ENCODE measurements at regions of chr2 and their contacts with region 1.

Region 1: DNA sequence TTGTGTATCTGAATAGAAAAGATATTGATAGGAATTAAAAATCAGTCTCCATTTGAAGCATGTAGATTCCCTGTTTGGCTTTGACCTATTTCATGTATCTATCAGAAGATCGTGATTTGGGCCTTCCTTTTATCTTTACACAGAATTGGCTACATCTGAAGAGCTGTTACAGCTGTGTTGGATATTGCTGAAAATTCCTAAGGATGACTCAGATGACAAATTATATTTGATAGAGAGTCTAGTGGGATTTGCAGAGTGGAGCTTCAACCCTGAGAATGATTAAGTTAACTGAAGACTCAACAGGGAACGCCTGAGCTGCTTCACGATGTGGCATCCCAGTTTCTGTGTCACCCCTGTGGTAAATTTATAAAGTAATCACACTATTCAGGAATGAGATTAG is 4.9 kb upstream of the COL3A1 start:
- DNase-seq: no peak
- ATAC-seq: no peak
- H3K4me3 ChIP-seq: no peak overlapping the region
- H3K27ac ChIP-seq: no peak overlapping the region
- H3K4me1 ChIP-seq: no peaks in the 10 kb centered on the region
- H3K27me3 ChIP-seq: no peaks in the 10 kb centered on the region

Region 2: DNA sequence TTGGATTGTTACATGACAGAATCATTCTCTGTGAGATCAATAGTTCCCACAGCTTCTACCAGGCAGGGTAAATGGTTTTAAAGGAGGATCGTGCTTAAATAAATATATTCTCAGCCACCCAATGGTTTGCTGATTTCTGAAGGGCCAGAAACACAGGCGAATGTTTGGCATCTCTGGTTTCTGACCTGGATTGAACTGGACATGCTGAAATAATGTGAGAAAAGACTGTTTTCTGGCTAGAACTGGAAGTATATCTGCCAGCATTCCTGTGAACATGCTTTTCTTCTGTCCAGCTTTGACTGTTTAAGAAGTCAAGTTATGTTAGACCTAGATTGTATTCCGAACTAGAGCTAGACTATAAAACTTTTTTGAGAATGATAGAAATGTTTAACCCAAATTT is 72.1 kb before region 1 on chr2:
- intact Hi-C with region 1: loop called in 1 of 4 experiments (anchors 10 kb)
- DNase-seq: no peak
- ATAC-seq: peak; percentile 52 to 91
- H3K4me3 ChIP-seq: peak overlapping the region; percentile 20
- H3K27ac ChIP-seq: no peak overlapping the region
- H3K4me1 ChIP-seq: peaks cover 2% of the 10 kb centered on the region
- H3K27me3 ChIP-seq: no peaks in the 10 kb centered on the region

Region 3: DNA sequence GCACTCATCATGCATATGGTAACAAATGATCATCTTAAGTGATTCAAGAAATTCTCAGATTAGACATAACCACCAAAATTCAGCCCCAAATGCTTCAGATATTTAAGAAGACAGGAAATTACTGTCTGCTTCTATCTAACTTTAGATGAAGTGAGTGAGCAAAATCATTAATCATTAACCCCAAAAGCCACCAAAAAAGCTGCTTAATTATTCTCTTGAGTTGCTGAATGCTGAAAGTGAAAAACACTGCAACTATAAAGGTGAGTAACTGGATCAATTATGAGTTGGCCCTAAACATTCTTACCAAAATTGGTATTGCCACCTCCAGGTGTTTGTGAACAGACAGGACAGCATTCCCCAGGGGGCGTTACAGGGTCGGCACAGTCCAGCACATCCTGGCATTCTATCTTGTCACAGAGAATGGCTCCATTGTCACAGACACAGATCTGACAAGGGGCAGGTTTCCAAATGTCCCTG is 140.7 kb after region 1 on chr2:
- intact Hi-C with region 1: no loop called
- DNase-seq: peak in 1 of 3 donors; percentile 18
- ATAC-seq: no peak
- H3K4me3 ChIP-seq: no peak overlapping the region
- H3K27ac ChIP-seq: no peak overlapping the region
- H3K4me1 ChIP-seq: no peaks in the 10 kb centered on the region
- H3K27me3 ChIP-seq: no peaks in the 10 kb centered on the region